A549 (cell line): ENCODE measurements at regions of chr20 and their contacts with region 1.

Region 1: DNA sequence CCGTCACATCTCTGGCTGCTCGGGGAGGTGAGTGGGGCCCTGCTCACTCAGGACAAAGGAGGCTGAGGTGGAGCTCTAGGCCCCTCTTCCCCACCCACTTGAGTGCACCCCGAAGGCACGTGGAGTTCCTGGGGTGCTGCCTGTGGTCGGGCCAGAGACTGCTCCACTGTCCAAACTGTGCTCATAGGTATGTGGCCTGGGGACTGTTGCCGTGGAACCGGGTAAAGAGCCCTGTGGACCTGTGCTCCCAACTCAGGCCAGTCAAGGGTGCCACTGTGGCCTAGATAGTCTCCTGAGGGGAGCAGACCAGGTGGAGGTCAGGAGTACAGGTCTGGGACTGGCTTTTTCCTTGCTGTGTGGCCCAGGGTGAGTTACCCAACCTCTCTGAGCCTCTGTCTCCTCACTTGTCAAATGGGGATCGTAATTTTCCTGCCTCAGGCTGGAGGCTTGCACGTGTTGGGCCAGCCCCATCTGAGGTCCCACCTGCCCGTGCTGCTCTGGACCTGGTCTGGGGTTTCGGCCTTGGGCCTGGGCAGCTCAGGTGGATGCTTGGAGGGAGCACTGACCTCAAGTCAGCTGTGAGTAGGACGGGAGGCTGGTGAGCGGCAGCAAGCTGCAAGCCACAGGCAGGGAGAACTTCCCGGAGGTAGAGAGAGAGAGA is 12.4 kb upstream of the NPBWR2 start:
- DNase-seq: no peak
- ATAC-seq: peak; percentile 16 to 39; a peak in 4 of 6 replicates
- H3K4me3 ChIP-seq: no peak overlapping the region
- H3K27ac ChIP-seq: no peak overlapping the region
- H3K4me1 ChIP-seq: no peaks in the 10 kb centered on the region
- CTCF ChIP-seq: no peak
- EP300 ChIP-seq: no peak
- POLR2A ChIP-seq: no peak
- RAD21 ChIP-seq: no peak

Region 2: GRCh38 chr20:64053841-64054661 is 65.8 kb before region 1 on chr20:
- CTCF ChIA-PET with region 1: interaction called, 11 read pairs
- POLR2A ChIA-PET with region 1: no interaction called
- DNase-seq: peak; percentile 52 to 68
- ATAC-seq: peak; percentile 30 to 57; a peak in 5 of 6 replicates
- H3K4me3 ChIP-seq: no peak overlapping the region
- H3K27ac ChIP-seq: peak overlapping the region in 1 of 2 experiments; percentile 55; a peak in 3 of 6 replicates
- H3K4me1 ChIP-seq: peaks cover 55% of the 10 kb centered on the region
- CTCF ChIP-seq: peak; percentile 19; the same call in 2 of the 3 replicates
- EP300 ChIP-seq: no peak
- POLR2A ChIP-seq: no peak
- RAD21 ChIP-seq: peak in 1 of 2 experiments; percentile 51; a peak in 2 of 5 replicates

Region 3: DNA sequence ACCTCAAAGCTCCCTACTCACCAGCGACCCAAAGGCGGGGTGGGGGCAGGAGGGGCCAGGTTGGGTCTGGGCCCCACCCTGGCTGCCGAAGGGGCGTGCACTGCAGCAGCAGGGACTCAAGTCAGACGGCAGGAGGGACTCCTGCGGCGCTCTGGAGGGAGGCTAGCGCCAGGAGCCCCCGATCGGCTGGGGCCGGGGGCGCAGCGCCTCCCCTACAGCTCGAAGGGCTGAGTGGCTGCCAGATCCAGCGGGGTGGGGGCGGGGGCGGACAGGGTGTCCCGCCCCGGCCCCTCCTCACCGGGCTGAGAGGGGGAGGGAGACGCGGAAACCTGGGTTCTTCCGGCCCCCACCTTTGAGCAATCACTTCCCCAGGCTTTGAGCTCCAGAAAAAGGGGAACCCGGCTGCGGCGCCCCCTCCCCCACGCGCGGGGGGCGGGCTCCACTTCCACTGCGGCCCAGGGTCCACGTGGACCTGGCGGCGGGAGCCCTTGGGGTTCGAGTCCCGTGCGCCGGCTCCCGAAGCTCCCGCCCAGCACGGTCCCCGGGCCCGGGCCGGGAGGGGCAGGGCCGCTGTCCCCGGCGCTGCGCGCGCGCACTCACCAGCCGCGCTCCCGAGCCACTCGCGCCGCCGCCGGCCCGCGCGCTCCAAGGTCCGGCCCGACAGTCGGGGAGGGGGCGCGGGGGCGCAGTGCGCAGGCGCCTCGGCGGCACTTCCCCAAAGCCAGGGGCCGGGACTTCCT is 40.4 kb before region 1 on chr20 and contains the start of gene RGS19:
- CTCF ChIA-PET with region 1: interaction called, 121 read pairs
- POLR2A ChIA-PET with region 1: interaction called, 4 read pairs
- DNase-seq: peak in 1 of 2 experiments; percentile 72
- ATAC-seq: peak; percentile 15 to 49; a peak in 5 of 6 replicates
- H3K4me3 ChIP-seq: peak within 1 kb of the TSS; percentile 89
- H3K27ac ChIP-seq: peak within 1 kb of the TSS; percentile 93 to 96
- H3K4me1 ChIP-seq: peaks cover 27% of the 10 kb centered on the region
- CTCF ChIP-seq: no peak
- EP300 ChIP-seq: no peak
- POLR2A ChIP-seq: peak; percentile 25; the same call in 1 of the 2 replicates
- RAD21 ChIP-seq: no peak
- polyA plus RNA-seq, gene RGS19: 12.3 and 13.8 TPM in 2 replicates

Region 4: DNA sequence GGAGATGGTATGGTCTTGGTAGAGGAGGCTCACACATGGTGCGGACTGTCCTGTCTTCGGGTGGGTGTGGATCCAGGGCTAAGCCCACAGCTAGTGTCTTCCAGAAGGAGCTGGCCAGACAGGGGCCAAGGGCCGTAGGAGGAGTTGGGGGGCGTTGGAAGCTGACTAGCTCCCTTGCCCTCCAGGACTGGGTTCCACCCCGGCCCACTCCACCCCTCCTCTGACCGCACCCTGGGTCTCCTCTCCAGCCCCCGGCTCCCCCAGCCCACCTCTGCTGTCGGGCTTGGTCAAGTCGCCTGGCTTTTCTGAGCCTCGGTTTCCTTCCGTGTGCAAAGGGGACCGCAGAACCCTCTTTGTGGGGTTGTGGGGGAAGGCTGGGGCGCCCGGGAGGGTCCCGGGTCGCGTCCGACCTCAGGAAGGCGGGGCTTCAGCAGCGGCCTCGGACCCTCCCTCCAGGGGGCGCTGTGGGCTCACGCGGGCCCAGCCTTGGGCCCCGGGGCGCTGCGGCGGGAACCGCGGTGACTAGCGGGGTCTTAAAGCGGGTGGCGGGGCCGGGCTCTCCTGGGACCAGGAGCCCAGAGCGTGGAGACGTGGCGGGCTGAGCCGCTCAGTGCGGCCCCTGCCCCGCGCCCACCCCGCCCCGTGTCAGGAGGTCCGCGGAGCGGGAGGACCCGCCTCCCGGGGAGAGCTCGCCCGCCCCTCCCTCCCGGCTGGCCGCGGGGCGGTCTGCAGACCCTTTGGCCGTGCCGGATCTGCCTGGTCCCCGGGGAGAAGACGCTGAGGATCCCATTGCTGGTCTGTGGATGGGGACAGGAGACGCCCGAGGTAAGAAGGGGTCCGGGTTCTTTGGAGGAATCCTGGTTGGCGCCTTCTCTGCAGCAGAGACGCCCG is 17.8 kb before region 1 on chr20:
- CTCF ChIA-PET with region 1: interaction called, 63 read pairs
- POLR2A ChIA-PET with region 1: no interaction called
- DNase-seq: peak; percentile 41 to 79
- ATAC-seq: peak; percentile 70 to 92
- H3K4me3 ChIP-seq: peak overlapping the region; percentile 71
- H3K27ac ChIP-seq: peak overlapping the region; percentile 81 to 91
- H3K4me1 ChIP-seq: 0 out of 3 replicates have a peak, but pooled peaks cover 6% of the 10 kb centered on the region
- CTCF ChIP-seq: peak; percentile 96
- EP300 ChIP-seq: no peak
- POLR2A ChIP-seq: no peak
- RAD21 ChIP-seq: peak; percentile 27 to 63

Region 5: DNA sequence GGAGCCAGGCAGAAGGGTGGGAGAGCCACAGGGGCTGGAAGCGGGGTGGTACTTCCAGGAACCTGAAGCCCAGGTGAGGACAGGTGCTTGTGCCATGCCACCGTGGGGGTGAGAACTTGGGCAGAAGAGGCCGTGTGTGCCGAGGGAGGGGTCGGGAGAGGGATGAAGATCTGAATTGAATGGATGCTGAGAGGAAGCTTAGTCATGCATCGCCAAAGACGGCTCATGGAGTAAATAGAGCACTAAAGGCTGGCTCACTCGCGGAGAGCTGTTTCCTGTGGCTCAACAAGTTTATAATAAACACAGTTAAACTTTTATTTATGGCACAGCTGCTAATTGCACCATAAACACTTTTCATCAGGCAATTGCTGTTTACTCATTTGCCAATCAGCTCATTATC is 22.8 kb after region 1 on chr20:
- CTCF ChIA-PET with region 1: interaction called, 29 read pairs
- POLR2A ChIA-PET with region 1: no interaction called
- DNase-seq: no peak
- ATAC-seq: no peak
- H3K4me3 ChIP-seq: no peak overlapping the region
- H3K27ac ChIP-seq: no peak overlapping the region
- H3K4me1 ChIP-seq: no peaks in the 10 kb centered on the region
- CTCF ChIP-seq: no peak
- EP300 ChIP-seq: no peak
- POLR2A ChIP-seq: no peak
- RAD21 ChIP-seq: no peak